ENCODE measurements at regions of chr3 and their contacts with region 1.

Region 1: GRCh38 chr3:178551916-178552321 is 15.7 kb downstream of the KCNMB2 start:
- DNase-seq: no peak
- CTCF ChIP-seq: no peak

Region 2: GRCh38 chr3:178275793-178276192 is 276.1 kb before region 1 on chr3:
- CTCF ChIA-PET with region 1: no interaction called
- POLR2A ChIA-PET with region 1: no interaction called
- DNase-seq: no peak
- CTCF ChIP-seq: no peak

Region 3: GRCh38 chr3:178465260-178466180 is 86.4 kb before region 1 on chr3:
- CTCF ChIA-PET with region 1: no interaction called
- POLR2A ChIA-PET with region 1: no interaction called
- DNase-seq: no peak
- CTCF ChIP-seq: no peak

Region 4: DNA sequence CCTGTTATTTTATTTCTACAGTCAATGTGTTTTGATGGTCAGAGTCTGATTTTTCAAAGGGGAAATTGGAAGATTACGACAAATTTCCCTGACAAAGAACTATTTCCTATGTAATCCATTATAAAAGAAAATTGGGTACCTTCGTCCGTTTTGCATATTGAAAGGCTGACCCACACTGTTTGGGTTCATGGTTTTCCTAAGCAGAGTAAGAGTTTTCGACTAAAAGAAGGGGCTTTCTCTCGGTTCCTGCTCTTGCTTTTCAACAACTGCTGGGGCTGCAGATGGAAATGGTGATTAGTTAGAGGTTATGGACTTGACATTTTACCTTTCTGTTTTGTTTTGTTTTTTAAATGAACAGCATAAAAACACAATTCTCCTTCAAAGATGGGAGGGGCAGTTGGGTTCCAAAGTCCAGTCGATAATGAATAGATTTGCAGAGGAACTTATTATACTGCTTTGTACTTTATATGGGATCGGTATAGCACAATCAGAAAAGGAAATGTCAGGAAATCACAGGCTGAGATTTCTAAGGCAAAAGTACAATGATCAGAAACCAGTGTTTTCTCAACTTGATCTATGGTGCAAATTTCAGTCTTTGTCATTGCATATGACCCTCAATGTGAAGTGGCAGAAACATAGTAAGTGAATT is 14.7 kb before region 1 on chr3:
- CTCF ChIA-PET with region 1: interaction called, 12 read pairs
- POLR2A ChIA-PET with region 1: no interaction called
- DNase-seq: no peak
- CTCF ChIP-seq: no peak

Region 5: DNA sequence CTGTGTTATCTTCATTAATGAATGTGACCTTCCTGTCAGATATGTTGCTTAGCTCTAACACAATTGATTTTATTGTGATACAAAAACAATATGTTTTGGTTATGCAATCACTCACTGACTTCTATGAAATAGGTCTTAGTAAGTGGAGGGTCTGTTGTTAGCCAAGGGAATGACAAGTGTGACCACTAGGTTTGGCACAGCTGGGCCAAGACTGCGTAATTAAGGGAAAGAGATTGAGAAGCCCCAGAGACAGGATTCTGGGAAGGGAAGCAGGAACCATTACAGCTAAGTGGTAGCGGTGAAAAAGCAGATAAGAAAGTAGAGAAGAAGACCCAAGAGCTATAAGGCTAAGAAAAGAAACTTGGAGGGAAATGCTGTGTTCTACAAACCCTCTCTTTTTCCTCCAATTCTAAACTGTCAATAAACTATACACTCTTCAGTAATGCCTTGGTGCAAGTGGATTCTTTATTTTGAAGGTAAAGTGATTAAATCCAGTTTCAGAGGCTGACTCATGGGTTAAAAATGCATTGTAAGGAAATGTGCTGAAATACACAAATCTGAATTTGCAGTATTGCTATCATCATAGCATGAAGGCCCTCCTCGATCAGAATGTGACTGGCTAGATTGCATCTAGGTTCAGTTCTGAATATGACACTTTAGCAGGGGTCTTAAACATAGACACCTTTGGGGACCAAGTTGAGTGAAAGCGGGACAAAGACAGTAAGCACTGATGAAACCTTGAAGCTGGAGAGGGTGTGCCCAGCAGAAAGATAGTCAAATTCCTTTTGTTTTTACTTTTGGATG is 10.4 kb after region 1 on chr3:
- CTCF ChIA-PET with region 1: interaction called, 19 read pairs
- POLR2A ChIA-PET with region 1: no interaction called
- DNase-seq: no peak
- CTCF ChIP-seq: no peak